Transverse colon (tissue), 4 donors: ENCODE measurements at regions of chr18 and their contacts with region 1.

Region 1: GRCh38 chr18:52716973-52717372 is 377.0 kb downstream of the DCC start:
- DNase-seq: peak; percentile 73
- H3K4me3 ChIP-seq: no peak overlapping the region
- H3K27ac ChIP-seq: no peak overlapping the region
- H3K4me1 ChIP-seq: peaks cover 0 to 21% (median 10%) of the 10 kb centered on the region in 4 donors
- H3K27me3 ChIP-seq: no peaks in the 10 kb centered on the region
- CTCF ChIP-seq: peak; percentile 53 to 73 (median 59)
- EP300 ChIP-seq: no peak
- POLR2A ChIP-seq: no peak

Region 2: DNA sequence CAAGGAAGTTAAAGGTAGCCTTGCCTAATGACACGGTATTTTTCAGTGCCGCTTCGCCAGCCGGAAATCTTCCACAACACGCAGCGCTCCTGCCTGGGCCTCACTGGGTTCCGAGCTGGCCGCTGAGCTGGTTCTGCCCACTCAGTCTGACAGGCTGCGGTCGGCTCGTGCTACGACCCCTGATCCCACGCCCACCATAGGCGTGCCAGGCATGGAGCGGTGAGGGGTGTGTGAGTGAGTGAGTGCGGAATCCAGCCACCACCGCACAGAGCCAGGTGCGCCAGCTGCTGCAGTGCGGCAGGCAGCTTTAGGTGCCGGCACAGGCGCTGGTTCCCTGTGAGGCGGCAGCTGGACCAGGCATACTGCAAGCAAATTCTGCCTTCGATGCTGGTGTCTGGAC is 30.9 kb after region 1 on chr18:
- in situ Hi-C with region 1: no loop called
- intact Hi-C with region 1: loop called (anchors 2 kb)
- DNase-seq: no peak
- H3K4me3 ChIP-seq: no peak overlapping the region
- H3K27ac ChIP-seq: no peak overlapping the region
- H3K4me1 ChIP-seq: no peaks in the 10 kb centered on the region
- H3K27me3 ChIP-seq: no peaks in the 10 kb centered on the region
- CTCF ChIP-seq: no peak
- EP300 ChIP-seq: no peak
- POLR2A ChIP-seq: no peak

Region 3: GRCh38 chr18:52903857-52904256 is 186.9 kb after region 1 on chr18:
- in situ Hi-C with region 1: loop called in 1 of 4 experiments (anchors 25 kb)
- intact Hi-C with region 1: loop called (anchors 10 kb)
- DNase-seq: peak; percentile 69
- H3K4me3 ChIP-seq: no peak overlapping the region
- H3K27ac ChIP-seq: no peak overlapping the region
- H3K4me1 ChIP-seq: no peaks in the 10 kb centered on the region
- H3K27me3 ChIP-seq: no peaks in the 10 kb centered on the region
- CTCF ChIP-seq: peak; percentile 64 to 73 (median 70)
- EP300 ChIP-seq: no peak
- POLR2A ChIP-seq: no peak

Region 4: DNA sequence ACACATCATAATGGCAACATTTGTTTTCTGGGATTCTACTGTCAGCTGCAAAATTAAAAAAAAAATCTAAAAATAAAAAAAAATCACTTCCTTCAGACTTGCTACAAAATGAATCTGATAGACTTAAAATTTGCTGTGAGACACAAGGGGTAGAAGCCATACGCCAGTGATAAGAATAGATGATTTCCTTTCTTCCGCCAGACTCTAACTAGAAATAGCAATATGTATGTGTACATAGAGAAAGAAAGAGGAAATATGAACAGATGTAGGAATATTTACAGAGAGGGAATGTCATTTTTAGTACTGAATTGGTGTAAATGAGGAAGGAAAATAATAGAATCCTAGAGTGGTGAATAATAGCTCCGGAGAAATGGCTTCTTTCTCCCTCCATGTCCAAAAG is 197.2 kb after region 1 on chr18:
- in situ Hi-C with region 1: loop called in 2 of 4 experiments (anchors 10 to 25 kb)
- intact Hi-C with region 1: loop called (anchors 10 kb)
- DNase-seq: no peak
- H3K4me3 ChIP-seq: no peak overlapping the region
- H3K27ac ChIP-seq: no peak overlapping the region
- H3K4me1 ChIP-seq: peaks cover 0 to 14% (median 6%) of the 10 kb centered on the region in 4 donors
- H3K27me3 ChIP-seq: no peaks in the 10 kb centered on the region
- CTCF ChIP-seq: no peak
- EP300 ChIP-seq: no peak
- POLR2A ChIP-seq: no peak